BJ (cell line): ENCODE measurements at regions of chr6 and their contacts with region 1.

Region 1: DNA sequence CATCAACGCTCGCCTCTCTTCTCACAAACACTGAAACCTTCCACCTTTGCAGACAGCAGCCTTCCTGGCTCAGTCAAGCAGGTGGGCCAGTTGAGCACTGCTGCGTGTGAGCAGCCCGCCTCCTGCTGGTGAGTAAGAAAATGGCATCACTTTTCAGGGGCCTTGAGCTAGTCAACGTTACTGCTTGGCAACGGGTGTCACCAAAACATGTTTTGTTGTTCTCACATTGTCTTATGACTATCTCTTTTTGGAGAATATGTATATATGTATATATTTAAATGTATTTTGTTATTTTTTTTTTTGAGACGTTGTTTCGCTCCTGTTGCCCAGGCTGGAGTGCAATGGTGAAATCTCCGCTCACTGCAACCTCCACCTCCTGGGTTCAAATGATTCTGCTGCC is 97.0 kb upstream of the AGPAT4 start:
- DNase-seq: no peak
- H3K4me3 ChIP-seq: no peak overlapping the region
- H3K27me3 ChIP-seq: no peaks in the 10 kb centered on the region
- CTCF ChIP-seq: peak; percentile 97

Region 2: GRCh38 chr6:160733050-160733646 is 637.7 kb before region 1 on chr6:
- CTCF ChIA-PET with region 1: interaction called, 55 read pairs
- POLR2A ChIA-PET with region 1: no interaction called
- DNase-seq: no peak
- H3K4me3 ChIP-seq: no peak overlapping the region
- H3K27me3 ChIP-seq: no peaks in the 10 kb centered on the region
- CTCF ChIP-seq: peak; percentile 58

Region 3: GRCh38 chr6:160992061-160992979 is 378.6 kb before region 1 on chr6:
- CTCF ChIA-PET with region 1: interaction called, 14 read pairs
- POLR2A ChIA-PET with region 1: no interaction called
- DNase-seq: no peak
- H3K4me3 ChIP-seq: peak overlapping the region; percentile 78
- H3K27me3 ChIP-seq: no peaks in the 10 kb centered on the region
- CTCF ChIP-seq: peak; percentile 76

Region 4: GRCh38 chr6:161186173-161186769 is 184.6 kb before region 1 on chr6:
- CTCF ChIA-PET with region 1: no interaction called
- POLR2A ChIA-PET with region 1: no interaction called
- DNase-seq: peak; percentile 43
- H3K4me3 ChIP-seq: no peak overlapping the region
- H3K27me3 ChIP-seq: no peaks in the 10 kb centered on the region
- CTCF ChIP-seq: no peak

Region 5: DNA sequence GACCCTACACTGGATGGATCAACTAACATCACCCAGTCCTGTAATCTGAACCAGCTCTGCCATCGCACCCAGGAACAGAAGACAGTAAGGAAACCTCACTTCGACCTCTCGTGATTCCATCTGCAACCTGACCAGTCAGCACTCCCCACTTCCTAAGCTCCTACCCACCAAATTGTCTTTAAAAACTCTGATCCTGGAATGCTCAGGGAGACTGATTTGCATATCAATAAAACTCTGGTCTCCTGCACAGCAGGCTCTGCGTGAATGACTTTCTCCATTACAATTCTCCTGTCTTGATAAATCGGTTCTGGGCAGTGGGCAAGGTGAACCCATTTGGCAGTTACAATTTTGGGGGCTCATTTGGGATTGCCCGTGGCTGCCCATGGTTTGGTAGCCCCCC is 78.7 kb before region 1 on chr6:
- CTCF ChIA-PET with region 1: no interaction called
- POLR2A ChIA-PET with region 1: no interaction called
- DNase-seq: no peak
- H3K4me3 ChIP-seq: no peak overlapping the region
- H3K27me3 ChIP-seq: 0 out of 2 replicates have a peak, but pooled peaks cover 1% of the 10 kb centered on the region
- CTCF ChIP-seq: no peak

Region 6: DNA sequence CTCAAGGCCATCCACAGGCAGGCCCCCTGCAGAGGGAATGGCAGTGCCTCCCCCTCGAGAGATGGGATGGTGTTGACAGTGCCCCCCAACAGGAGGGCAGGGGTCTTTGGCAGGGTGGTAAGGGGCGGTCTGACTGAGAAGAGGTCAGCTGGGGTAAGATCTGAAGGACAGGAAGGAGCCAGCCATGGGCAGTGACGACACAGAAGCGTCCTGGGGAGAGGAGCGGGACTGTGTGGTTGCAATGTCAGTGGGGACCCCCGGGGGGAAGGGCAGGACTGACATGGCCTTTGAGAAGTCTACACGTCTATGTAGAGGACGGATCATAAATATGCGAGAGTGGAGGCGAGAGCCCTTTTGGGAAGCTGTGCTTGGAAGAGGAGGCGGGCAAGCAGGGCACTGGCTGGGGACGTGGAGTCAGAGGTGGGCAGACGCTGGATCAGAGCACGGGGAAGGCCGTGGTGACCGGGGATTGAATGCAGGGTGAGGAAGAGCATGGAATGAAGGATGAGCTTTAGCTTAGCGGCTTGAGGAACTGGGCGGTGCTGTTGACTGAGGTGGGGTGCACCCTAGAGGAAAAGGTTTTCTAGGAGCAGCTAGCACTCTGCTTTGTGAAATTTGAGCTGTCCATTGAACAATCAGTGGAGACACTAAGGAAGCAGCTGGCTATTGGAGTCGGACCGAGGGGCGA is 14.6 kb before region 1 on chr6:
- CTCF ChIA-PET with region 1: interaction called, 15 read pairs
- POLR2A ChIA-PET with region 1: no interaction called
- DNase-seq: no peak
- H3K4me3 ChIP-seq: no peak overlapping the region
- H3K27me3 ChIP-seq: no peaks in the 10 kb centered on the region
- CTCF ChIP-seq: no peak

Region 7: GRCh38 chr6:161536224-161536630 is 165.3 kb after region 1 on chr6:
- CTCF ChIA-PET with region 1: no interaction called
- POLR2A ChIA-PET with region 1: no interaction called
- DNase-seq: no peak
- H3K4me3 ChIP-seq: no peak overlapping the region
- H3K27me3 ChIP-seq: no peaks in the 10 kb centered on the region
- CTCF ChIP-seq: no peak